AG04449 (cell line): ENCODE measurements at regions of chr22 and their contacts with region 1.

Region 1: GRCh38 chr22:37887610-37888378 is 18.3 kb upstream of the MICALL1 start:
- DNase-seq: peak; percentile 67
- H3K4me3 ChIP-seq: no peak overlapping the region
- CTCF ChIP-seq: peak; percentile 68

Region 2: GRCh38 chr22:37905534-37906363 is 18.0 kb after region 1 on chr22 and contains the start of gene MICALL1:
- CTCF ChIA-PET with region 1: interaction called, 103 read pairs
- POLR2A ChIA-PET with region 1: interaction called, 8 read pairs
- DNase-seq: no peak
- H3K4me3 ChIP-seq: peak within 1 kb of the TSS; percentile 80
- CTCF ChIP-seq: no peak

Region 3: DNA sequence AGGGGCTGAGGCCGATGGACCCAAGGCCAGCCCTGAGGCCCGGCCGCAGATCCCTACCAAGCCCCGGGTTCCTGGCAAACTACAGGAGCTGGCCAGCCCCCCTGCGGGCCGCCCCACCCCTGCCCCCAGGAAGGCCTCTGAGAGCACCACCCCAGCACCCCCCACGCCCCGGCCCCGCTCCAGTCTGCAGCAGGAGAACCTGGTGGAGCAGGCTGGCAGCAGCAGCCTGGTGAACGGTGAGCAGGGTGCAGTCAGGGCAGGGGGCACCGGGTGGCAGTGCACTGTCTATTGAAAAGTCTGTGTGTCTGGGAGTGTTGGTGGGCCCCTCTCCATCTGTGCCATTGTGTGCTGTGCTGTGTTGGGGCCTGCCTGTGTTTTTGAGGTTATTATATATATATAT is 34.4 kb after region 1 on chr22:
- CTCF ChIA-PET with region 1: interaction called, 13 read pairs
- POLR2A ChIA-PET with region 1: no interaction called
- DNase-seq: no peak
- H3K4me3 ChIP-seq: no peak overlapping the region
- CTCF ChIP-seq: no peak

Region 4: DNA sequence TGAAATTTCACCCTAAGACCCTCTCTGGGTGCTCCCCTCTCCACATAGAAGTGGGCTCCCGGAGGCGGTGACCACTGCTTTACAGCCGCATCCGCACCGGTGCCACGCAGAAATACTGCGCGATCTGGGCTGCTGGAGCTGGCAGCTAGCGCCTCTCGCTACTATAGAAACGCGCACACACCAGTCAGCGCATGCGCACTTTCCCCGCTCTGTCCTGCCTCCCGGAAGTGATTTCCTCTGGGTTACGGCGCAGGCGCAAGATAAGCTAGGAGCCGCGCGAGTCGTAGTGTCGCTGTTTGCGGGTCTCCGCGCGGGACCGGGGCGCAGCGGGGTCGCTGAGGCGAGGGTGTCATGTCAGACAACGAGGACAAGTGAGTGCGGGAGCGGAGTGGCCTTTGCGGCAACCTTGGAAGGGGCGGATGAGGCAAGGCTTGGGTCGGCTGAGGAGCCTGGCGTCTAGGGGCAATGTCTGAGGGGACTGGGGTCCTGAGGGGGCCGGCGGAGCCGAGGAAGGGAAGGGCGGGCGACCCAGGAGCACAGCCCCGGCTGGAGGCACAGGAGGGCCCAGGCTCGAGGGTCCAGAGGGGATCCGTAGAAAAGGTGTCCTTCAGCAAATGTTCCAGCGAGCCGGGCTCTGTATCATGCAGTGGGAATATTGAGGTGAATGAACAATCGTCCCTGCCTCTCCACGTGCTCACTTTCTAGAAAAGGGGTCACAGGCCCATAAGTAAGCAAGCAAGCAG is 65.8 kb after region 1 on chr22 and contains the starts of genes C22orf23 and POLR2F:
- CTCF ChIA-PET with region 1: interaction called, 12 read pairs
- POLR2A ChIA-PET with region 1: interaction called, 3 read pairs
- DNase-seq: peak; percentile 36
- H3K4me3 ChIP-seq: peak within 1 kb of the TSS; percentile 100
- CTCF ChIP-seq: no peak

Region 5: DNA sequence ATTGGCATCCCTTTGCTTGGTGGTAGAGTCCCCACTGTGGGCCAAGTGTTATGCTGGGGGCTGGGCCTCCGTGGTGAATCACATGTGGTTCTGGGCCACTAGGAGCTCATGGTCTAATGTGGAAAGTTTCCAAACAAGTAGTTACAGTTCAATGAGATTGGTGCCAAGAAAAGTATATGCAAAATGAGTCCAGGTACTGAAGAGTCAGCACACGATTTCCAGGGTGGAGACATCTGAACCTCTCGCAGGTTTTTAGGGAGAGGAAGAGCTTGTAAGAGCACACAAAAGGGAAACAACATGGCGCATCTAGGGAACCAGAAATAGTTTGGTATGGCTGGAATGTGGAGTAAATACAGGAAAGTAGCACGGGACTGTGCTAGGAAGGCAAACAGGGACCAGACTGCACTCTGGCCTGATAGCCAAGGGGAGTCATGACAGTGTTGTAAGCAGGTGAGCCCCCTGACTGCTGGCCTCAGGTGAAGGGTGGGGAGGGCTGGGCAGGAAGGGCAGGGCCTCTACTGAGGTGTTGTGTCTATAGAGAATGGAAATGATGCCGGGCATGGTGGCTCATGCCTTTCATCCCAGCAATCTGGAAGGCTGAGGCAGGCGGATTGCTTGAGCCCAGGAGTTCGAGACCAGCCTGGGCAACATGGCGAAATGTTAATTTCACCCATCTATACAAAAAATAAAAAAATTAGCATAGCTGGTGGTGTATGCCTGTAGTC is 78.3 kb after region 1 on chr22:
- CTCF ChIA-PET with region 1: interaction called, 101 read pairs
- POLR2A ChIA-PET with region 1: no interaction called
- DNase-seq: no peak
- H3K4me3 ChIP-seq: no peak overlapping the region
- CTCF ChIP-seq: no peak

Region 6: DNA sequence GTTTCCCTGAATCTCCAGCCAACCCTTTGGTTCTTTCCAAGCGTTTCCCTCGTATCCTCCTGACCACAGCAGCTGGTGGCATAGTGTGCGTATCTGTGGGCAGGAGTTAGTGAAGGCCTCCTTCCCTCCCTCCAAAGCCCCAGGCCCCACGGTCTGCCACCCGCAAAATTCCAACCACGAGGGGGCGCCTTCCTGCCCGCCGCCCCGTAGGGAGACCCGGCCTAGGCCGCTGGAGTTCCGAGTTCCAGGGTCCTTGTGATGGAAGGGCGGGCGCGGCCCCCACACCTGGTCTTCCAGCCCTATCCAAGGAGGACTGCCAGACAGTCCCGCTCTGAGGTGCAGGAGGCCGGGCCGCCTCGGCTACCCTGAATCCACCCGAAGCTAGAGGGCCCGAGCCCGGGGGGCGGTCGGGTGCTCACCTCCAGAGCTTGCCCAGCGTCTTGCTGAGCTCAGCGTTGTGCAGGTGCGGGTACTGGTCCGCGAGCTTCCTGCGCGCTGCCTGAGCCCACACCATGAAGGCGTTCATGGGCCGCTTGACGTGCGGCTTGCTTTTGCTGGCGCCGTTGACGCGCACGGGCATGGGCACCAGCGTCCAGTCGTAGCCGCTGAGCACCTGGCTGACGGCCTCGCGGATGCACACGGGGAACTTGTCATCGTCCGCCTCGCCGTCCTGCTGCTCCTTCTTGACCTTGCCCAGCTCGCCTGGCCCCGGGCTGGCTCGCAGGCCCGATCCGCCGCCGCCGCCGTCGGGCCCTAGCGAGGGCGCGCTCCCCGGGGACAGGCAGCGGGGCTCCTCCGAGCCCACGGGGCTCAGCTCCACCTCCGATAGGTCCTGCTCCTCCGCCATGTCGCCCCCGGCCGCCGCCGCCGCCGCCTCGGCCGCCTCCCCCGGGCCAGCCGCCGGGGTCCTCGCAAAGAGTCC is 95.4 kb after region 1 on chr22:
- CTCF ChIA-PET with region 1: no interaction called
- POLR2A ChIA-PET with region 1: no interaction called
- DNase-seq: no peak
- H3K4me3 ChIP-seq: no peak overlapping the region
- CTCF ChIP-seq: peak; percentile 3

Region 7: DNA sequence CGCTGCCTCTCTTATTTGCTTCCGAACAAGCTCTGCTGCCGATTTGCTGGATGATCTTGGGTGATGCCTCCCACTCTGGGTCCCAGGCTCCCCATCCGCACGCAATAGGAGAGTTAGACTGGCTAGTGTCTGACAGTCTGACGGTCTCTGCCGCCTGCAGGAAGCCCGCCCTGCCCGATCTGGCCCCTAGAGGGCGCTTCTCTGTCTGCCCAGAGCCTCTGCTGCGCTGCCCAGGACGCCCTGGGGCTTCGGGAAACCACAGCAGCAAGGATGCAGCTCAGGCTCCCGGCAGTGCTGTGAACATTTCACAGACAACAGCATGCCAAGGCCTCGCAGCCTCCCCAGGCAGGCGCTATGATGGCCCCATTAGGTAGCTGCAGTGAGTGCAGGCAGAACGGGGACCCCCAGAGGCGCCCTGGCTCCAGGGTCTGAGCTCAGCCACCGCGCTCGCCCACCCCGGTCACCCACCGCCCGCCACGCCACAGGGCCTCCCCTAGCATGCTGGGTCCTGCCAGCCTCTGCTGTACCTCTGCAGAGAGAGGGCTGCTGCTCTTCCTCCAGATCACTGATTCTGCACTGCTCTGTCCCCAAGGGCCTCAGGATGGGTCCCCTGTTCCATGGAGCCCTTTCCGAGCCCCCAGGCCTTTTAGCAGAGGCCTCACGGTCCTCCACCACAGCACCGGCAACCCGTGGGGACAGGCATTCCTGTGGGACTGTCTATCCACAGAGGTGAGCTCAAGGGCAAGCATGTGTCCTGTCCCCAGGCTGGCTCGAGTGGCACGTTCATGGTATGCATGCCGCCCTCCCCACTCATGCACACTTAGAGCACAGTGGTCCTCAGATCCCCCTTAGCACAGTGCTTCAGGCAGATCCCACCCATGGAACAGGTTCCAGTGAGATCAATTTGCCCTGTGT is 226.9 kb after region 1 on chr22:
- CTCF ChIA-PET with region 1: no interaction called
- POLR2A ChIA-PET with region 1: no interaction called
- DNase-seq: peak; percentile 23
- H3K4me3 ChIP-seq: no peak overlapping the region
- CTCF ChIP-seq: peak; percentile 98